ENCODE measurements at regions of chr4 and their contacts with region 1.

Region 1: DNA sequence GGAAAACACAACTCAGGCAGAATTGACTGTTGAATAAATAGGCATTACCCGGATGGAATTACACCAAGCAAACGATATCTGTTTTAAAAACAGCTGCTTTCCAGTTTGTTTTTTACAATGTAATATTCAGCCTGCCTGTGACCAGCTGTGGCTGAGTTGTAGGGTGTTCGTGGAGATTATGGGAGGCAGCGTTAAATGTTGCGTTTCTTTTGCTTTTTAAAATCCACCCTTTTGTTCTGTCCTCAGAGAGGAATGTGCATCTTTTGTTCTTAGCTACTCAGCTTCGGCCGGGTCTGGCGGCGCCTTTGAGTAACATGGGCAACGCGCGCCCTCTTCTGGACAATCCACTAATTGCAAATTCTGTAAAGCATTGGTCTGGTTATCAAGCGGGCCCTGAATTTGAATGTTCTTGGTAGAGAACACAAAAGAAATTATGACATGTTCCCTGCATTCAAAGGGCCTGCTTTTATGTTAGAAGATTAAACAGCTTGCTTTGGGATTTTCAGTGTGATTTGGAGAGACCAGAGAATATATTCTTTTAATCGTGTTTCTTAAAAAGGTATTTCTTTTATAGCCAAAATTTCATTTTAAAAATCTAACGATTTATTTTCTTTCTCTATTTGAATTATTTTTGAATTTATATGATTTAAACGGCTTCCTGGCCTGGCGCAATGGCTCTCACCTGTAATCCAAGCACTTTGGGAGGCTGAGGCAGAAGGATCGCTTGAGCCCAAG is 76.3 kb upstream of the TRIM2 start:
- DNase-seq: peak; percentile 84
- H3K4me3 ChIP-seq: no peak overlapping the region
- H3K27ac ChIP-seq: no peak overlapping the region
- H3K4me1 ChIP-seq: no peaks in the 10 kb centered on the region
- CTCF ChIP-seq: peak; percentile 98

Region 2: GRCh38 chr4:152515678-152516077 is 612.2 kb before region 1 on chr4:
- CTCF ChIA-PET with region 1: no interaction called
- POLR2A ChIA-PET with region 1: no interaction called
- intact Hi-C with region 1: no loop called
- DNase-seq: no peak
- H3K4me3 ChIP-seq: no peak overlapping the region
- H3K27ac ChIP-seq: no peak overlapping the region
- H3K4me1 ChIP-seq: peaks cover 14% of the 10 kb centered on the region
- CTCF ChIP-seq: no peak

Region 3: DNA sequence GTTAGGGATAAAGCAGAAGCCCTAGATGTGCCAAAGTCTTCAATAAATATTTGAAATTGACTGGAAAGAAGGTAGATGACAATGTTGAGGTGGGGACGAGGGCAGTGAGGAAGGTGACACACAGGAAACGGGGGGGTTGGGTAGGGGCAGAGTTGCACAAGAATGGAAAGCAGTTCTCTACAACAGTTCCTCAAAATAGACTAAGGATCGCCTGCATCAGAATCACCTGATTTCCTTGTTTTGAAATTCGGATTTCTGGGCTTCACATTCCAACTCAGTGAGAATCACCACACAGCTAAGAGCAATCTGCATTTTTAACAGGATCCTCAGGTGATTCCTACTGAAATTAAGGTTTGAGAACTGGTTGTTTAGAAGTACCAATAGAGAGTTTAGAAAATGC is 277.6 kb before region 1 on chr4:
- CTCF ChIA-PET with region 1: no interaction called
- POLR2A ChIA-PET with region 1: interaction called, 6 read pairs
- intact Hi-C with region 1: loop called (anchors 1 kb)
- DNase-seq: peak; percentile 71
- H3K4me3 ChIP-seq: peak overlapping the region; percentile 23
- H3K27ac ChIP-seq: peak overlapping the region; percentile 12
- H3K4me1 ChIP-seq: peaks cover 21% of the 10 kb centered on the region
- CTCF ChIP-seq: no peak

Region 4: DNA sequence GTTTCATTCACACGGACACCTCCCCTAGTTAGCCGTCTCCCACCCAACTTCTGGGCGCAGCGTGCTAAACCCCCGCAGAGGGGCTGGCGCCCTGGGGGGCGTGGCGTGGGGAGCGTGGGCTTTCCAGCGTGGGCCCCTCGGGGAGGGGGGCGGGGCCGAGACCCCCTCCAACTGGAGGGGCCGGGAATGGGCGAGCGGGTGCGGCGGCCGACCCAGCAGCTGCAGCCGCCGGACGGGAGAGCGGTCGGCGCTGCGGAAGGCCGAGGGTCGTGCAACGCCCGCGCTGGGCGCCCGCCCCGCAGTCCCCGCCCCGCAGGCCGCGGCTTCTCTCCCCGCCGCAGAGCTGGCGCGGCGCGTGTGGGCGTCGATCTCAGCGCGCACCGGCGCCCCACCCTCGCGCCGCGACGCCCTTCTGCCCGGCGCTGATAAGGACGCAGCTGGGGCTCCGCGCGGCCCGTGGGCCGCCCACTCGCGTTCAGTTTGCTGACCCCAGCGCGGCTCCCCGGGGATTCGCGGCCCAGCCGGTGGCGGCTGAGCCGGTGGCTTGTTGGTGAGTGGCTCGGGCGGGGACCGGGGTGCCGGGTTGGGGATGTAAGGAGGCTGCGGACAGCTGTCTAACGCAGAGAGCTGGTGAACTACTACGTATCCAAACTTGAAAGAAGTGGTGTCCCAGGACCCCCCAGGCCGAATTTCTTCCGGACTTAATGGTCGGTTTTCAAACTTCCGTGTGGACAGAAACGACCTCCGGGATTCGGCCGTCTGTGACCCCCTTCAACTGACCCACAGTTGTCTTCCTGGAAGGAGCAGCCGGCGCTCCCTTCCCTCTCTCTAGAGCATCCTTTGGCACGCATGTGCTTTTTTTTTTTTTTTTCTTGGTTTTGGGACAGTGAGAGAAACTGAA is 190.3 kb before region 1 on chr4:
- CTCF ChIA-PET with region 1: interaction called, 3 read pairs
- POLR2A ChIA-PET with region 1: no interaction called
- intact Hi-C with region 1: loop called (anchors 10 kb)
- DNase-seq: no peak
- H3K4me3 ChIP-seq: no peak overlapping the region
- H3K27ac ChIP-seq: no peak overlapping the region
- H3K4me1 ChIP-seq: no peaks in the 10 kb centered on the region
- CTCF ChIP-seq: no peak

Region 5: GRCh38 chr4:153207567-153207966 is 79.6 kb after region 1 on chr4:
- CTCF ChIA-PET with region 1: no interaction called
- POLR2A ChIA-PET with region 1: no interaction called
- intact Hi-C with region 1: no loop called
- DNase-seq: no peak
- H3K4me3 ChIP-seq: no peak overlapping the region
- H3K27ac ChIP-seq: no peak overlapping the region
- H3K4me1 ChIP-seq: no peaks in the 10 kb centered on the region
- CTCF ChIP-seq: peak; percentile 38; the same call in 1 of the 2 replicates